Caco-2 (cell line): ENCODE measurements at regions of chr9 and their contacts with region 1.

Region 1: GRCh38 chr9:72952914-72953313 is at the start of gene ALDH1A1:
- DNase-seq: peak; percentile 1 to 23
- H3K4me3 ChIP-seq: peak within 1 kb of the TSS; percentile 36
- H3K4me3 Mint-ChIP-seq: peak within 1 kb of the TSS; percentile 77
- H3K27ac Mint-ChIP-seq: no peak within 1 kb of the TSS
- H3K4me1 ChIP-seq: no peaks in the 10 kb centered on the region
- H3K4me1 Mint-ChIP-seq: peaks cover 8% of the 10 kb centered on the region
- H3K27me3 ChIP-seq: no peaks in the 10 kb centered on the region
- H3K27me3 Mint-ChIP-seq: no peaks in the 10 kb centered on the region
- CTCF ChIP-seq: no peak
- total RNA-seq, gene ALDH1A1: 104 and 119 TPM in 2 replicates

Region 2: DNA sequence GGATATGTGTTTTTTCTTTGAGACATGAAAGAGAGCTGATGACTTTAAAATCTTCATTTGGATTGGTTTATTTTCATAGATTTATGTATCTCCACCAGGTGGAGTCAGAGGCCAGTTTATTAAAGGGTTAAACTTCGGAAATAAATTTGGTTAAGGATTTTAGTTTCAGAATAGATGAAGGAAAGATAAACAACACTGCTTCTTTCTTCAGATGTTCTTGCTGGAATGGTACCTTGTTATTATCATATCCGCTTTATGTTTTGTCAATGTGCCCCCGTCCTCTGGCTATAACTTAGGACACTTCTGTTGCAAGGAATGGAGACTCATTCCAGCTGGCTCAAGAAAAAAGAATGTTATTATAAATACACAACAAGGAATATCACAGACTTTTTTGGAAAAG is 81.2 kb before region 1 on chr9:
- CTCF ChIA-PET with region 1: no interaction called
- POLR2A ChIA-PET with region 1: no interaction called
- intact Hi-C with region 1: loop called (anchors 5 kb)
- DNase-seq: no peak
- H3K4me3 ChIP-seq: no peak overlapping the region
- H3K4me3 Mint-ChIP-seq: no peak overlapping the region
- H3K27ac Mint-ChIP-seq: no peak overlapping the region
- H3K4me1 ChIP-seq: no peaks in the 10 kb centered on the region
- H3K4me1 Mint-ChIP-seq: no peaks in the 10 kb centered on the region
- H3K27me3 ChIP-seq: no peaks in the 10 kb centered on the region
- H3K27me3 Mint-ChIP-seq: no peaks in the 10 kb centered on the region
- CTCF ChIP-seq: no peak

Region 3: DNA sequence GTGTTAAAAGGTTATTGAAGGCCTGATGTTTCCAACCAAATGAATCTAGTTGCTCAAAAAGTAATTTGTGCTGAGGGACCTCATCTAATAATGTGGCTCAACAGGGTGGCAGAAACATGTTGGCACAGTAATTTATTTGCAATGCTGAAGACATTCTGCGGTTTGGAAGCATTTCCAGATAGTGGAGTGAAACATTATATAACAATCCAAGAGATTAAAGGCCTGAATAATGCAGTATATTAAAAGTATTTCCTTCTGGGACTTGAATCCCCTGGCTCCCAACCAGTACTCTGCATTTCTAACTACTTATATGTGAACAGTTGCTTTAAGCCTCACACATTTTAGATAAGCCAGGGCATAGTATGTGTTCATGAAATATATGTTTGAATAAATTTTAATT is 25.8 kb after region 1 on chr9:
- CTCF ChIA-PET with region 1: no interaction called
- POLR2A ChIA-PET with region 1: no interaction called
- intact Hi-C with region 1: loop called (anchors 1 kb)
- DNase-seq: no peak
- H3K4me3 ChIP-seq: no peak overlapping the region
- H3K4me3 Mint-ChIP-seq: no peak overlapping the region
- H3K27ac Mint-ChIP-seq: no peak overlapping the region
- H3K4me1 ChIP-seq: peaks cover 14% of the 10 kb centered on the region; the same call in 1 of the 2 replicates
- H3K4me1 Mint-ChIP-seq: no peaks in the 10 kb centered on the region
- H3K27me3 ChIP-seq: no peaks in the 10 kb centered on the region
- H3K27me3 Mint-ChIP-seq: no peaks in the 10 kb centered on the region
- CTCF ChIP-seq: no peak

Region 4: GRCh38 chr9:73023025-73023541 is 70.2 kb after region 1 on chr9:
- CTCF ChIA-PET with region 1: interaction called, 3 read pairs
- POLR2A ChIA-PET with region 1: no interaction called
- intact Hi-C with region 1: loop called (anchors 2 kb)
- DNase-seq: peak; percentile 22 to 29
- H3K4me3 ChIP-seq: no peak overlapping the region
- H3K4me3 Mint-ChIP-seq: no peak overlapping the region
- H3K27ac Mint-ChIP-seq: no peak overlapping the region
- H3K4me1 ChIP-seq: no peaks in the 10 kb centered on the region
- H3K4me1 Mint-ChIP-seq: no peaks in the 10 kb centered on the region
- H3K27me3 ChIP-seq: no peaks in the 10 kb centered on the region
- H3K27me3 Mint-ChIP-seq: no peaks in the 10 kb centered on the region
- CTCF ChIP-seq: peak; percentile 39 to 53